ENCODE measurements at regions of chr4 and their contacts with region 1.

Region 1: GRCh38 chr4:53763813-53764597 is 172.7 kb upstream of the LNX1 start:
- DNase-seq: no peak
- H3K4me3 ChIP-seq: no peak overlapping the region
- H3K27ac ChIP-seq: no peak overlapping the region
- H3K4me1 ChIP-seq: no peaks in the 10 kb centered on the region
- H3K27me3 ChIP-seq: no peaks in the 10 kb centered on the region
- CTCF ChIP-seq: no peak
- POLR2A ChIP-seq: no peak

Region 2: DNA sequence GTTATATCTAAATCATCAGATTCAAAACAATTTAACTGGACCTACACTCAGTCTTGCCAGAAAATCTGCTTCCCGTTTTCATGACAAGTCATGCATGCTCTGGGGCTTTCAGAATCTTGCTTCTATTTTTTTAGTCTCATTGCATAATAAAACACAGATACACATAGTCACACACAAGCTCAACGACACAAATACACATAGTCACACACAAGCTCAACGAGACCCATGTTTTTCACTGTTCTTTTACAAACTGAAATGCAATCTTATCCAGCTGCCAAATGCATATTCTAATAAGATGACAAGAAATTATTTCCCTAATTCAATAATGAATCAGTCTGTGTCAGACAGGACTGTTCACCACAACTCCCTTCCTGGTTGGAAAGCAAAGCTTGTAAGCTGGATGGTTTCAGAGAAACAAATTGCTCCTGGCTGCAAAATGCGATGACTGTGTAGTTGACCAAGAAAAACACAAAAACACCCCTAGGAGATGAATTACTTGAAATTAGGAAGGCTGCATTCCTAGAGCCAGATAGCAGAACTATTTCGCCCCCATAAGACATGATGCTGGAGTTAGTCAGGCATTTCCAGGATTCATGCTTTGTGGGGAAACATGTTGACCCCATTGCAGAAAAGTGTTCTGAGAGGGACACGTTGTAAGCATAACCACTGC is 91.7 kb after region 1 on chr4:
- CTCF ChIA-PET with region 1: no interaction called
- POLR2A ChIA-PET with region 1: no interaction called
- dilution Hi-C with region 1: no loop called
- intact Hi-C with region 1: loop called (anchors 10 kb)
- DNase-seq: no peak
- H3K4me3 ChIP-seq: no peak overlapping the region
- H3K27ac ChIP-seq: no peak overlapping the region
- H3K4me1 ChIP-seq: no peaks in the 10 kb centered on the region
- H3K27me3 ChIP-seq: peaks cover 0 to 7% of the 10 kb centered on the region in 2 experiments
- CTCF ChIP-seq: no peak
- POLR2A ChIP-seq: no peak

Region 3: DNA sequence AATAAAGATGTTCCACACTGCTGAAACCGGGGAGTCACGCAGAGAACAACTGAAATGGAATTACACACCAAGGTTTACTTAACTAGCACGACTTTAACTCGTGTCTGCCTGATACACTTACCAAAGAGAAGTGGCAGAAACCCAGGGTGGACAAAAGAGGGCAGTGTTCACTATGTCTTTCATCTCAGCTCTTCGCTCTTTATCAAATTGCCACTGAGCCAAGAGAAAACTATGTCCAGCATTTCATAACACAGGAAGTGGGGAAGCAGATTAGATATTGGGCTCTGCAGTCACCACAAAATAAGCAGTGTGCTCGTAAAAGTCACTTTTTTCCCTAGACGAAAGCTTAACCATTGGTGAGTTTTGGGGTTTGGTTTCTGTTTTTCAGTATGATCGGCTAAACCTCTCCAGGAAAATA is 144.7 kb after region 1 on chr4:
- CTCF ChIA-PET with region 1: no interaction called
- POLR2A ChIA-PET with region 1: no interaction called
- dilution Hi-C with region 1: no loop called
- intact Hi-C with region 1: no loop called
- DNase-seq: peak; percentile 87
- H3K4me3 ChIP-seq: no peak overlapping the region
- H3K27ac ChIP-seq: no peak overlapping the region
- H3K4me1 ChIP-seq: peaks cover 3% of the 10 kb centered on the region
- H3K27me3 ChIP-seq: peaks cover 26% of the 10 kb centered on the region in 2 experiments
- CTCF ChIP-seq: peak; percentile 77 to 85
- POLR2A ChIP-seq: no peak